ENCODE measurements at regions of chr10 and their contacts with region 1.

Region 1: DNA sequence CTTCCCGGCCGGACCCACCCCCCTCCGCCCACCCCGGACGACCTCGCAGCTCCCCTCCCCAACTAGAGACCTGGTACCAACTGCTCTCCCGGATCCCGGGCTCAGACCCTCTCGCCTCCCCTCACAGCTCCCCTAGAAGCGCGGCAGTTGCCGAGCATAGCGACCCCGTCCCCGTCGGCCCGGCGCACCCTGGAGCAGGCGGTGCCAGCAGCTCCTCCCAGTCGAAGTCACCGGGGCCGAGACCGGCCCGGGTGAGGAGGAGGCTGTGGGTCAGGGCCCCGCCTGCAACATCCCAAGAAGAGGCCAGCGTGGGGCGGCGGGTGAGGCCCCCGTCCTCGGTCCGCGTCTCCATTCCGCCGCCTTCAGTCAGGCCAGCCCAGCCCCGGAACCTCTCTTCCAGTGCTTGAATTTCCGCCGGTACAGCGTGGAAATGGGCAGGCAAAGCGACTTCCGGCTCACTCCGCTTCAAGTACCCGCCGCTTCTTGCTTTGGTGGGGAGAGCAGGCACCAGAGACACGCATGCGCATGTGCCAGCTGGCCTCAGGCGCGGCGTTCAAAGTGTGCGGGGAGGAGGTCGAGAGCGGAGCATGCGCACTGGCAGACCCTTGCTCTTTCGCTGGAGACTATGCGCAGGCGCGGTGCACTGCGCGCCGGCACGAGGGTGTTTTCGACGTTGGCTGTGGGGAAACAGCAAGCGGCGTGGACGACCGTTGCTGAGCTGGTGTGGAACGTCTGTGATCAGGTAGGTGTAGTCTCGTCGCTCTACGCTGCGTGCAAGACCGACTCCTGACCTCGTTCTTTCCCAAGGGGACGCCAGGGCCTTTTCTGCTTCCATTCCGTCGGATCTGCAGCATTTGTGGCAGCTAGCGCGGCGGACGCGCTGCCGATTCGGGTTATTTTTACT is at the start of gene C10orf88:
- DNase-seq: peak; percentile 95 to 98 (median 98)
- H3K4me3 ChIP-seq: peak within 1 kb of the TSS; percentile 47 to 73
- H3K4me3 Mint-ChIP-seq: peak within 1 kb of the TSS; percentile 90 to 97 (median 92)
- H3K27ac ChIP-seq: peak within 1 kb of the TSS; percentile 57
- H3K27ac Mint-ChIP-seq: peak within 1 kb of the TSS; percentile 87 to 98 (median 93)
- H3K4me1 ChIP-seq: peaks cover 27% of the 10 kb centered on the region
- H3K4me1 Mint-ChIP-seq: peaks cover 17 to 43% (median 33%) of the 10 kb centered on the region in 4 donors
- H3K27me3 ChIP-seq: no peaks in the 10 kb centered on the region
- H3K27me3 Mint-ChIP-seq: peaks cover 0 to 2% of the 10 kb centered on the region in 2 donors
- total RNA-seq, gene C10orf88: 10.5 to 12.3 TPM

Region 2: GRCh38 chr10:122388287-122388997 is 565.6 kb before region 1 on chr10:
- CTCF ChIA-PET with region 1: no interaction called
- POLR2A ChIA-PET with region 1: no interaction called
- intact Hi-C with region 1: no loop called
- DNase-seq: no peak
- H3K4me3 ChIP-seq: no peak overlapping the region
- H3K4me3 Mint-ChIP-seq: peak overlapping the region in 2 of 8 donors; percentile 21 to 57
- H3K27ac ChIP-seq: no peak overlapping the region
- H3K27ac Mint-ChIP-seq: no peak overlapping the region
- H3K4me1 ChIP-seq: peaks cover 22% of the 10 kb centered on the region
- H3K4me1 Mint-ChIP-seq: peaks cover 36 to 72% (median 53%) of the 10 kb centered on the region in 4 donors
- H3K27me3 ChIP-seq: no peaks in the 10 kb centered on the region
- H3K27me3 Mint-ChIP-seq: no peaks in the 10 kb centered on the region

Region 3: GRCh38 chr10:122879339-122880273 is 74.5 kb before region 1 on chr10 and contains the start of gene FAM24B:
- CTCF ChIA-PET with region 1: interaction called, 3 read pairs
- POLR2A ChIA-PET with region 1: interaction called, 9 read pairs
- intact Hi-C with region 1: loop called (anchors 2 kb)
- DNase-seq: peak; percentile 90 to 96 (median 96)
- H3K4me3 ChIP-seq: peak within 1 kb of the TSS; percentile 47 to 79
- H3K4me3 Mint-ChIP-seq: peak within 1 kb of the TSS; percentile 91 to 95 (median 92)
- H3K27ac ChIP-seq: peak within 1 kb of the TSS; percentile 68
- H3K27ac Mint-ChIP-seq: peak within 1 kb of the TSS; percentile 79 to 97 (median 95)
- H3K4me1 ChIP-seq: peaks cover 41% of the 10 kb centered on the region
- H3K4me1 Mint-ChIP-seq: peaks cover 31 to 55% (median 43%) of the 10 kb centered on the region in 4 donors
- H3K27me3 ChIP-seq: no peaks in the 10 kb centered on the region
- H3K27me3 Mint-ChIP-seq: no peaks in the 10 kb centered on the region
- total RNA-seq, gene FAM24B: 10.8 to 12.8 TPM

Region 4: DNA sequence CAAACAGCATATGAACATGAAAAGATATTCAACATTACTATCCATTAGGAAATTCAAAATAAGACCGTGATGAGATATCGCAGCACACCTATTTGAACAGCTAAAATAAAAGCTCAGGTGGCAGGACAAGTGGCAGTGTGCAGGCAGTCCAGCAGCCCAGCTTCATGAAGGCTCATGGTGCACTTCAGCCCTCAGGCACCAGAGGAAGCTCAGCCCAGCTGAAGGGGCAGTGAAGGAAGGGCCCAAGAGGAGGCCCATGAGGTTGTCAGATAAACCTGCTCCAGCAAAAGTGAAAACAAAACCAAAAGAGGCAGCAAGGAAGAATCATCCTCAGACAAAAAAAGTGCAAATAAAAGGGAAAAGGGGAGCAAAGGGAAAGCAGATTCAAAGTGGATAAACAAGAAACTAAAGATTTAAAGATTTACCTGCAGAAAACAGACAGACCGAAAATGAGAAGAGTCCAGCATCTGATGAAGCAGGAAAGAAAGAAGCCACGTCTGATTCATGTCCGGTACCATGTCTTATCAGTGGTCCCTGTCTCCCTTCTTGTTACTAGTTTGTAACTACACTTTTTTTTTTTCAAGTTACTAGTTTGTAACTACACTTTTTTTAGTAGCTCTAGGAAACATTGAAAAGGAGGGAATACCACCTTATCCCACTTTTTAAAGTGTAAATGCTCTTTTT is 59.7 kb before region 1 on chr10:
- CTCF ChIA-PET with region 1: no interaction called
- POLR2A ChIA-PET with region 1: no interaction called
- intact Hi-C with region 1: no loop called
- DNase-seq: no peak
- H3K4me3 ChIP-seq: no peak overlapping the region
- H3K4me3 Mint-ChIP-seq: no peak overlapping the region
- H3K27ac ChIP-seq: no peak overlapping the region
- H3K27ac Mint-ChIP-seq: no peak overlapping the region
- H3K4me1 ChIP-seq: no peaks in the 10 kb centered on the region
- H3K4me1 Mint-ChIP-seq: no peaks in the 10 kb centered on the region
- H3K27me3 ChIP-seq: no peaks in the 10 kb centered on the region
- H3K27me3 Mint-ChIP-seq: peaks cover 0 to 1% of the 10 kb centered on the region in 2 donors

Region 5: DNA sequence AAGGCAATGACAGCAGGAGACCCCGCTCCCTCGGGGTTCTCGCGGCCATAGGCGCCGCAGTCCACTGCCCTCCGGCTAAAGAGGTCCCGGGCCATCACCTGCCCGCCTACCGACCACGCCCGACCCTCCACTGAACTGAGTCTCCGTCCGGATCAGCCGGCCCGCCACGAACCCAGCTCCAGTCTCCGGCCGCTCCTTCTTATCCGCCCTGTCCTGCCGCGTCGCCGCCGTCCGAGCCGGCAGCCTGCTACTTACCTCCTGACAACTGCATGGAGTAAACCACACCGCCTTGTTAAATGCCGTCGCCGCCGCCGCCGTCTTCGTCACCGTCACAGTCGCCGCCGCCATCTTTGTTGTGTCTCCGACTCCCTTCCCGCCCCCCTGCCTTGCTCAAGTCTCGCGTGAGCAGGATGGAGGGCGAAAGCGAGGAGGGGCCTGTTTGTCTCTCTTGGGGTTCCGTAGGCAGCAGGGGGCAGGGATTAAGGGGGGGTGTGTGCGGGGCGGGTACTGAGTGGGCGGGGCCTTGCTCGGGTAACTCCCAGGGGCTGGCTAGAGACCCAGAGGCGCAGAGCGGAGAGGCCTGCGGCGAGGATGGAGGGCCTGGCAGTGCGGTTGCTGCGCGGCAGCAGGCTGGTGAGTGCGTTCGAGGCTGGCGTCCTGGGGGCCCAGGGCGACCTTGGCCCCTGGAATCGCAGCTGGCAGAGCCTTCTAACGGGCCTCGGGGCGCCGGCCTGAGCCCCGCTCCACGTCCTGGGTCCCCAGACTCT is 54.5 kb after region 1 on chr10 and contains the starts of genes ACADSB and IKZF5:
- CTCF ChIA-PET with region 1: interaction called, 3 read pairs
- POLR2A ChIA-PET with region 1: interaction called, 41 read pairs
- intact Hi-C with region 1: loop called (anchors 1 kb)
- DNase-seq: peak; percentile 95 to 99 (median 97)
- H3K4me3 ChIP-seq: peak within 1 kb of the TSS; percentile 68 to 87
- H3K4me3 Mint-ChIP-seq: peak within 1 kb of the TSS; percentile 96 to 100 (median 99)
- H3K27ac ChIP-seq: peak within 1 kb of the TSS; percentile 91
- H3K27ac Mint-ChIP-seq: peak within 1 kb of the TSS; percentile 92 to 100 (median 99)
- H3K4me1 ChIP-seq: peaks cover 57% of the 10 kb centered on the region
- H3K4me1 Mint-ChIP-seq: peaks cover 41 to 72% (median 55%) of the 10 kb centered on the region in 4 donors
- H3K27me3 ChIP-seq: no peaks in the 10 kb centered on the region
- H3K27me3 Mint-ChIP-seq: no peaks in the 10 kb centered on the region
- total RNA-seq, gene ACADSB: 35.7 to 36.4 TPM
- total RNA-seq, gene IKZF5: 37.4 to 45.9 TPM

Region 6: DNA sequence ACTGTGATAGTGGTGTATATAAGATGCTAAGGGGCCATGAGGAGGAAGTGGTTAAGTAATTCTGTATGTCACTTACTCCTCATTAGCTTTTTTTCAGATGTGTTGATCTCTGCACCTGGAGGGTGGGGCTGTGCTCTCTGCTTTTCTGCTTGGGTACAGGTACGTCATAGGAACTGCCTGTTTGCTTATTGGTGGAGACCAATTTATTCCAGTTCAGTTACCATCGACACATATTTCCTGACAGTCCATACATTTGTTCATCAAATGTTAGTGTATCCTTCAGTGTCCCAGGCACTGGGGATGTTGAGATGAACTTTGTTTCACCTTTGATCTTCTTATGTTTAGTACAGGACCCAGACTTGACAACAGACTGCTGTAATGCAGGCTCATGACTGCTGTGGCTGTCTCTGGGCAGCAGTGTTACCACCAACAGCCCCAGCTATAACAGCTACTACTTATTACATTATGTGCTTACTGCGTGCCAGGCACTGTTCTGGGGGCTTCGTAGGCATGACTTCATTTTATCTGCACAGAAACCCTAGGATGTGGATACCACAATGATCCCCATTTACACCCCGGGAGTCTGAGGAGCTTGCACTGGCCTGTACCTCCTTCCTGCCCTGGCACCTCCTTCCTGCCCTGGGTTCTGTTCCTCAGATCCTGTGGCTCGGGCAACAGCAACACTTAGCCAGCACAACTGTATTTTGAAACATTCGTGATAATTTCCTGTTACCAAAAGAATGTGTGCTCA is 287.5 kb after region 1 on chr10:
- CTCF ChIA-PET with region 1: no interaction called
- POLR2A ChIA-PET with region 1: no interaction called
- intact Hi-C with region 1: loop called (anchors 5 kb)
- DNase-seq: peak; percentile 81 to 88 (median 85)
- H3K4me3 ChIP-seq: peak overlapping the region in 1 of 2 donors; percentile 39
- H3K4me3 Mint-ChIP-seq: peak overlapping the region; percentile 8 to 85 (median 71)
- H3K27ac ChIP-seq: peak overlapping the region; percentile 76
- H3K27ac Mint-ChIP-seq: peak overlapping the region; percentile 82 to 99 (median 97)
- H3K4me1 ChIP-seq: peaks cover 32% of the 10 kb centered on the region
- H3K4me1 Mint-ChIP-seq: peaks cover 21 to 39% (median 28%) of the 10 kb centered on the region in 4 donors
- H3K27me3 ChIP-seq: no peaks in the 10 kb centered on the region
- H3K27me3 Mint-ChIP-seq: no peaks in the 10 kb centered on the region

Region 7: DNA sequence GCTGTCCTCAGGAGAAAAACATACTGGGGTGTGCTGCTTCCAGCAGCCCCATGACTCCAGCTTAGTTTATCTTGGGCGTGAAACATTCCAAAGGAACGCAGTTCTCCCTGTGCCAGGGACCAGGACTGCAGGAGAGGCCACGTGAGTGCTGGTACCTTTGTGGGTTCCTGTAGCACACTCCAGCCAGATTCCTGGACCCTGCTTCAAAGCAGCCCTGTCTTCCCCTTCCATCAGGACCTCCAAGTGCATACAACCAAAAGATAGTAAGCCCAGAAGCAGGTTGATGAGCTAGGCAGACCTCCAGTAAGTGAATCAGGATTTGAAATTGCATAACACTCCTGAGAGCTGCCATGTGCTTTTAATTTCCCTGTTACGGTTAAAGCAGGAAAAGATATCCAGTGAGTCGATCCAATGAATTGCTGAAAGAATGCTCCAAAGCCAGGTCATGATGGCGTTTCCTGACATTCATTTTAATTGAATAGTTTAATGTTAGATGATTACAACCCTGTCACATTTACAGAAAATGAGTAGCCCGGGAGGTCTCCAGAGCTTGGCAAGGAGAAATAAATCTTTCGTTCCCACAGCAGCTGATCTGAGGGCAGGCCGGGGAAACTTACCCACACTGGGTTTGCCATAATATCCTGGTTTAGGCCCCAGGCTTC is 976.4 kb after region 1 on chr10:
- CTCF ChIA-PET with region 1: no interaction called
- POLR2A ChIA-PET with region 1: no interaction called
- intact Hi-C with region 1: no loop called
- DNase-seq: no peak
- H3K4me3 ChIP-seq: no peak overlapping the region
- H3K4me3 Mint-ChIP-seq: no peak overlapping the region
- H3K27ac ChIP-seq: no peak overlapping the region
- H3K27ac Mint-ChIP-seq: no peak overlapping the region
- H3K4me1 ChIP-seq: no peaks in the 10 kb centered on the region
- H3K4me1 Mint-ChIP-seq: peaks cover 0 to 5% (median under 1%) of the 10 kb centered on the region in 4 donors
- H3K27me3 ChIP-seq: no peaks in the 10 kb centered on the region
- H3K27me3 Mint-ChIP-seq: peaks cover 0 to 8% of the 10 kb centered on the region in 2 donors